GM12878 (cell line): ENCODE measurements at regions of chr4 and their contacts with region 1.

Region 1: DNA sequence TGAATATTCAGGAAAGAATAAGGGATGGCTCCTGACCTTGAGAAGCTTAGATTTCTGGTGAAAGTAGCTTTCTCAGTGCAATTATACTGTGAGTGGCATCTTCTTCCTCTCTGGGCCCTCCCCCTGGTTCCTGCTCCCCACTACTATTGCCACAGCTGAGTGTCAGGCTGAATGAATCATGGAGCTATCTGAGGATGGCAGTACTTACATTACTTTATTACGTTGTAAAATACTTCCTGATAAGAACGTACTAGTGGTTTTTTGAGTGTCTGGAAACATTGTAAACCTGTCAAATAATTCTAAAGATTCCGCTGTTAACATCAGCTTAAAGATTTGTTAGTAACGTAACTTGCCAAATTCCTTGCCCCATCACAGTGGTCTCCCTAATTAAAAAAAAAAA is 36.2 kb downstream of the ARHGAP10 start:
- DNase-seq: no peak
- ATAC-seq: peak; percentile 48; the same call in 2 of the 3 replicates
- H3K4me3 ChIP-seq: no peak overlapping the region
- H3K27ac ChIP-seq: no peak overlapping the region
- H3K4me1 ChIP-seq: peaks cover 11% of the 10 kb centered on the region
- H3K27me3 ChIP-seq: no peaks in the 10 kb centered on the region
- CTCF ChIP-seq: no peak
- EP300 ChIP-seq: no peak
- POLR2A ChIP-seq: no peak
- RAD21 ChIP-seq: no peak

Region 2: GRCh38 chr4:147741190-147741785 is 26.8 kb before region 1 on chr4:
- CTCF ChIA-PET with region 1: interaction called, 3 read pairs
- POLR2A ChIA-PET with region 1: interaction called, 5 read pairs
- RAD21 ChIA-PET with region 1: interaction called, 4 read pairs
- SMC1A ChIA-PET with region 1: interaction called, 12 read pairs
- in situ Hi-C with region 1: no loop called
- intact Hi-C with region 1: no loop called
- DNase-seq: no peak
- ATAC-seq: peak; percentile 21
- H3K4me3 ChIP-seq: no peak overlapping the region
- H3K27ac ChIP-seq: no peak overlapping the region
- H3K4me1 ChIP-seq: peaks cover 7% of the 10 kb centered on the region
- H3K27me3 ChIP-seq: no peaks in the 10 kb centered on the region
- CTCF ChIP-seq: no peak
- EP300 ChIP-seq: no peak
- POLR2A ChIP-seq: no peak
- RAD21 ChIP-seq: no peak